GM13976 (cell line): ENCODE measurements at regions of chr9 and their contacts with region 1.

Region 1: GRCh38 chr9:125374443-125375309 is 113.0 kb downstream of the GAPVD1 start:
- DNase-seq: peak; percentile 92
- CTCF ChIP-seq: peak; percentile 76

Region 2: DNA sequence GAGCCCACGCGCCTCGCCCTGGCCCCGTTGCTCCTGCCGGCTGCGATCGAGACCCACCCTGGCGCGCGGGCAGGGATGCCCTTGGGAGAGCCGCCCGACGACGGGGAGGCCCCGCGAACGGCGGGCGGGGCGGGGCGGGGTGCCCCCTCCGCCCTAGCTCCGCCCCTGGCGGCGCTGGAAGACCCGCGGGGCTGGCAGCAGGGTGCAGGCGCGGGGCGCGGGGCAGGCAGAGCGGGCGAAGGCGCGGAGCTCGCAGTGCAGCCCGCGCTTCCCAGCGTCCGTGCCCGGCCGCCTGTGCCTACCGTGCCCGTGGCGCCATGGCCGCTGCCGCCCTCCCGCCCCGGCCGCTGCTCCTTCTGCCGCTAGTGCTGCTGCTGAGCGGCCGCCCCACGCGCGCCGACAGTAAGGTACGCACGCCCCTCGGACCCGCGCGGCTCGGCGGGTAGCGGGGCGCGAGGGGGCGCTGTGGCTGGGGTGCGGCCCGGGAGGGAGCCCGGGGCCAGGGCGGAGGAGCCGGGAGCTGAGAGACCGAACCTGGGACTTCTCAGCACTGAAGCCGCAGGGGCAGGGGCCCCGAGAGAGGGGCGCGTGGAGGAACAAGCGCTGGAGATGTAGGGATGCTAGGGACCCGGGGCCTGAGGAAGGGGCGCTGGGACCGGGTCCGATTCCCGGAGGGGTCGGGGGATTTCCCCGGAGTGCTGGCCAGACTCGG is 597.6 kb before region 1 on chr9 and contains the start of gene OLFML2A:
- in situ Hi-C with region 1: loop called (anchors 25 kb)
- DNase-seq: peak; percentile 72
- CTCF ChIP-seq: peak; percentile 52

Region 3: GRCh38 chr9:124861342-124862229 is 513.1 kb before region 1 on chr9 and contains the starts of genes ARPC5L and RPL35:
- in situ Hi-C with region 1: loop called (anchors 25 kb)
- DNase-seq: peak; percentile 99
- CTCF ChIP-seq: no peak